ENCODE measurements at regions of chr15 and their contacts with region 1.

Region 1: DNA sequence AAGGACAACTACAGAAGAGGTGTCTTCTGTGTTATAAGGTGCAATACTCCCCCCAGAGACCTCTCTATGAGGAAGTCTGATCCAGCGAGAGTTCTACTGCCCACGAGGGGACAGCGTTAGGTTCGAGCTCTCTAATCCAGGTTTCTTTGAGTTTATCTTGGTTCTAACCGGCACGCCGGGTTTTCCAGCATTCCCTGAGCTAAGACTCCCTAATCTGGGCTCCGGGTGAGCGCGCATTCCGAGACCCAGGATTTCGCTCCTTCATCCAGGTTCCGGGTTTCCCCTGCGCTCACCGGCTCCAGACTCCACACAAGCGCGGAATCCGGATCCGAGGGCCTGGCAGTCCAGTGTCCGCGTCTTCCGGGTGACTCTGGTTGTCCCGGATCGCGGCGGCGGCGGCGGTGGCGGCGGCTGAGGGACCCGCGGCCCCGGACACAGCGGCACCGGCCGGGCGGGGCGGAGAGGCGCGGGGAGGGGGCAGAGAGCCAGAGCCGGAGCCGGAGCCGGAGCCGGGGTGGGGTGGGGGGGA is at the start of gene ZNF609:
- DNase-seq: peak; percentile 89
- ATAC-seq: peak; percentile 86
- H3K4me3 ChIP-seq: peak within 1 kb of the TSS; percentile 52 to 72 (median 62)
- H3K4me3 Mint-ChIP-seq: peak within 1 kb of the TSS; percentile 86
- H3K27ac ChIP-seq: peak within 1 kb of the TSS in 1 of 2 donors; percentile 53
- H3K27ac Mint-ChIP-seq: peak within 1 kb of the TSS; percentile 75
- H3K4me1 ChIP-seq: peaks cover 60 to 61% of the 10 kb centered on the region in 2 donors
- H3K4me1 Mint-ChIP-seq: peaks cover 62% of the 10 kb centered on the region
- H3K27me3 ChIP-seq: no peaks in the 10 kb centered on the region
- H3K27me3 Mint-ChIP-seq: no peaks in the 10 kb centered on the region
- CTCF ChIP-seq: no peak
- total RNA-seq, gene ZNF609: 32.9 and 36.7 TPM in 2 replicates

Region 2: DNA sequence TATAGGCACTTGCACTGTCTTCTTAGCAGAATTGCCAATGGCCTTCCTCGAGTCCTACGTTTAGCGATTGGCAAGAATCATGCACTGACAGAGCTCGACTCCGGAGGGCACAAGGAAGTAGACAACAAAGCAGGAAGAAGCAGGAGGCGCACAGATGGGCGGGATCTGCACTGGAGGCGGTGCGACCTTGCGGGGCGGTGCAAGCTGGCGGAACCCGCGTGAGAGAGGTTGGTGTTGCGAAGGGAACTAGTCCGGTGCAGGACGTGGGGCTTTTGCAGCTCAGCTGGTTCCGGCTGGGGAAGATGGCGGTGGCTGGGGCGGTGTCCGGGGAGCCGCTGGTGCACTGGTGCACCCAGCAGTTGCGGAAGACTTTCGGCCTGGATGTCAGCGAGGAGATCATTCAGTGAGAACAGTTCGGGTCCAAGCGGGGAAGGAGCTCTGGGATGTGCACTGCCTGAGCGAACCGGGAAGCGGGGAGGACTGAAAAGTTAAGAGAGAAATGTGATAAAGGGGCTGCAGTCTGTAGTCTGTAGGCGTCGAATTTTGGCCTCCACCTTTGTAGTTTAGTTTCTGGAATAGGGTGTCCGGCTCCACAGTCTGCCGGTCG is 72.6 kb before region 1 on chr15 and contains the start of gene TRIP4:
- CTCF ChIA-PET with region 1: interaction called, 6 read pairs
- POLR2A ChIA-PET with region 1: interaction called, 4 read pairs
- intact Hi-C with region 1: loop called (anchors 5 kb)
- DNase-seq: peak; percentile 96
- ATAC-seq: peak; percentile 100
- H3K4me3 ChIP-seq: peak within 1 kb of the TSS; percentile 63 to 97 (median 82)
- H3K4me3 Mint-ChIP-seq: peak within 1 kb of the TSS; percentile 97
- H3K27ac ChIP-seq: peak within 1 kb of the TSS; percentile 58 to 70
- H3K27ac Mint-ChIP-seq: peak within 1 kb of the TSS; percentile 95
- H3K4me1 ChIP-seq: peaks cover 10 to 18% of the 10 kb centered on the region in 2 donors
- H3K4me1 Mint-ChIP-seq: peaks cover 15% of the 10 kb centered on the region
- H3K27me3 ChIP-seq: no peaks in the 10 kb centered on the region
- H3K27me3 Mint-ChIP-seq: no peaks in the 10 kb centered on the region
- CTCF ChIP-seq: no peak
- total RNA-seq, gene TRIP4: 35.7 and 38.2 TPM in 2 replicates

Region 3: DNA sequence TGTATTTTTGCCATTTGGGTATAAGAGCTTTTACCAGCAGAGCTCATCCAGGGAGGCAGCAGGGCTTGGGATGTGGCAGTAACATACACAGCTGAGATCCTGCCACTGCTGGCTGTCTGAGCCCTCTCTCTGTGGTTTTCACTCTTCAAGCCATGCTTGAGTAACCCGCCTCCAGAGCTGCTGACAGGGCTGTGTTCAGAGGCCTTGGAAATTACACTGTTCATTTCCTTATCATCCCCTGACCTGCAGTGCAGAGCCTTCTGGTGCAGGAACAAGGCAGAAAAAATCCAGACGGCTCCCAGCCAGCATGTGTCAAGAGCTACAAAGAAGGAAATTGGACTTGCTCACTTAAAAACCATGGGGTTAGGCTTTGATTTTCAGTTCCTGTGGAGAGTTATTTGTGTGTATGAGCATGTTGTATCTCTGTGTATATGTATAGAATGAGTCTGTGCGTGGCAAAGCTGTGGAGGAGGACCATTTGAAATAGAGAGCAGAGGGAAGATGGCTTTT is 47.1 kb after region 1 on chr15:
- CTCF ChIA-PET with region 1: no interaction called
- POLR2A ChIA-PET with region 1: no interaction called
- intact Hi-C with region 1: loop called (anchors 5 kb)
- DNase-seq: peak; percentile 57
- ATAC-seq: peak; percentile 76
- H3K4me3 ChIP-seq: peak overlapping the region in 3 of 5 experiments; percentile 6 to 32 (median 11)
- H3K4me3 Mint-ChIP-seq: peak overlapping the region; percentile 68
- H3K27ac ChIP-seq: peak overlapping the region; percentile 35 to 62
- H3K27ac Mint-ChIP-seq: peak overlapping the region; percentile 50
- H3K4me1 ChIP-seq: peaks cover 33 to 34% of the 10 kb centered on the region in 2 donors
- H3K4me1 Mint-ChIP-seq: peaks cover 50% of the 10 kb centered on the region
- H3K27me3 ChIP-seq: no peaks in the 10 kb centered on the region
- H3K27me3 Mint-ChIP-seq: no peaks in the 10 kb centered on the region
- CTCF ChIP-seq: no peak

Measured in B cell (primary cell).